Activated CD4-positive, alpha-beta T cell treated with anti-CD3 and anti-CD28 coated beads for 36 hours (primary cell): ENCODE measurements at regions of chr10 and their contacts with region 1.

Region 1: GRCh38 chr10:37234692-37235091 is 109.3 kb downstream of the ANKRD30A start:
- DNase-seq: no peak
- ATAC-seq: no peak
- H3K4me3 Mint-ChIP-seq: no peak overlapping the region
- H3K27ac Mint-ChIP-seq: no peak overlapping the region
- H3K4me1 Mint-ChIP-seq: no peaks in the 10 kb centered on the region
- H3K27me3 Mint-ChIP-seq: no peaks in the 10 kb centered on the region

Region 2: GRCh38 chr10:37206132-37206531 is 28.6 kb before region 1 on chr10:
- CTCF ChIA-PET with region 1: no interaction called
- POLR2A ChIA-PET with region 1: no interaction called
- intact Hi-C with region 1: no loop called
- DNase-seq: no peak
- ATAC-seq: no peak
- H3K4me3 Mint-ChIP-seq: no peak overlapping the region
- H3K27ac Mint-ChIP-seq: no peak overlapping the region
- H3K4me1 Mint-ChIP-seq: no peaks in the 10 kb centered on the region
- H3K27me3 Mint-ChIP-seq: no peaks in the 10 kb centered on the region

Region 3: DNA sequence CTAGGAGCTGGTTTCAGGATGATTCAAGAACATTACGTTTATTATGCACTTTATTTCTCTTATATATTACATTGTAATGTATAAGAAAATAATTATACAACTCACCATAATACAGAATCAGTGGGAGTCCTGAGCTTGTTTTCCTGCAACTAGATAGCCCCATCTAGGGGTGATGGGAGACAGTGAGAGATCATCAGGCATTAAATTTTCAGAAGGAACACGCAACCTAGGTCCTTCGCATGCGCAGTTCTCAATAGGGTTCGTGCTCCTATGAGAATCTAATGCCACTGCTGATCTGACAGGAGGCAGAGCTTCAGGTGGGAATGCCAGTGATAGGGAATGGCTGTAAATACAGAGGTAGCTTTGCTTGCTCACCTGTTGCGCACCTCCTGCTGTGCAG is 28.6 kb after region 1 on chr10:
- CTCF ChIA-PET with region 1: no interaction called
- POLR2A ChIA-PET with region 1: no interaction called
- intact Hi-C with region 1: no loop called
- DNase-seq: no peak
- ATAC-seq: no peak
- H3K4me3 Mint-ChIP-seq: no peak overlapping the region
- H3K27ac Mint-ChIP-seq: no peak overlapping the region
- H3K4me1 Mint-ChIP-seq: no peaks in the 10 kb centered on the region
- H3K27me3 Mint-ChIP-seq: no peaks in the 10 kb centered on the region

Region 4: DNA sequence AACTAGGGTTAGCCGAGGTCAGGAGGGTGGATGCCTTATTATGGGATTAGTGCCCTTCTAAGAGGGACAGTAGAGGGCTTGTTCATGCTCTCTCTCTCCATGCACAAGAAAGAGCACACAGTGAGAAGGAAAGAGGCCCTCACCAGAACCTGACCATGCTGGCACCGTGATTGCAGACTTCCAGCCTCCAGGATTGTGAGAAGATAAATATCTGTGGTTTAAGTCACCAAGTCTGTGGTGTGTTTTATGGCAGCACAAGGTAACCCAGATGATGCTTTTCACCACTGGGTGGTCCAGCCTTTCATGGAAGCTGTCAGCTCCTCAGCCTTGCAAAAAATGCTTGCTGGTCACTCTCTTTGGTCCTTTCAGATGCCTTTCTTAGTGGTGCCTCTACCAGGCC is 66.6 kb after region 1 on chr10:
- CTCF ChIA-PET with region 1: interaction called, 4 read pairs
- POLR2A ChIA-PET with region 1: no interaction called
- intact Hi-C with region 1: loop called in 1 of 2 experiments (anchors 2 kb)
- DNase-seq: no peak
- ATAC-seq: no peak
- H3K4me3 Mint-ChIP-seq: no peak overlapping the region
- H3K27ac Mint-ChIP-seq: no peak overlapping the region
- H3K4me1 Mint-ChIP-seq: no peaks in the 10 kb centered on the region
- H3K27me3 Mint-ChIP-seq: no peaks in the 10 kb centered on the region